BJ (cell line): ENCODE measurements at regions of chr5 and their contacts with region 1.

Region 1: DNA sequence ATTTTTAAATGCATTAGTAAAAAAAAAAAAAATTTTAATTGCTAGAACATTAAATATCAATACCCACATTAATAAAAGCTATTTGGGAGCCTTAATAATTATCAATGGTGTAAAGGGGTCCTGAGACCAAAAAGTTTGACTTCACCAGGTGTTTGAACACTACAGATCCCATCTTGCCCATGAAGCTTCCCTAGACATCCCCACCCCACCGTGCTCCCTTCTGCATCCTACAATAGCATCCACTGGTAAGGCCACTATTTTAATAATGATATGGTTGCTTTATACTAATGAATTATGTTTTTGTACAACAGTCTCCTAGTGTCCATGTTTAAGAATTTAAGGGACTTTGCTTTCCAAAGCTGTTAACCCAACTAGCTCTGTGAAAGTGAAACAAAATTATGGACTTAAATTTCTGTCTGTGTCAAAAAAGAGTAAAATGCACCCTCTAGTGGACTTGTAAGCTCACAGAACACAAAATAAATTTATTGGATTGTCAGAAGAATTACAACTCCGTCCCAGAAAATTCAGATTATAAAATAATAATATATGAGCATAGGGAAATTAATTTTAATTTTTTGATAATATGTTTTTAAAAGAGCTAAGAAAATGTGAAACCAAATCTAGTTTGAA is 76.0 kb downstream of the ARL15 start:
- DNase-seq: no peak
- H3K4me3 ChIP-seq: no peak overlapping the region
- H3K27me3 ChIP-seq: no peaks in the 10 kb centered on the region
- CTCF ChIP-seq: peak; percentile 56

Region 2: GRCh38 chr5:53170748-53171349 is 1063.6 kb before region 1 on chr5:
- CTCF ChIA-PET with region 1: interaction called, 15 read pairs
- POLR2A ChIA-PET with region 1: no interaction called
- DNase-seq: no peak
- H3K4me3 ChIP-seq: no peak overlapping the region
- H3K27me3 ChIP-seq: no peaks in the 10 kb centered on the region
- CTCF ChIP-seq: peak; percentile 65

Region 3: GRCh38 chr5:54317511-54318260 is 83.3 kb after region 1 on chr5:
- CTCF ChIA-PET with region 1: no interaction called
- POLR2A ChIA-PET with region 1: no interaction called
- DNase-seq: no peak
- H3K4me3 ChIP-seq: no peak overlapping the region
- H3K27me3 ChIP-seq: no peaks in the 10 kb centered on the region
- CTCF ChIP-seq: no peak